ENCODE measurements at regions of chr5 and their contacts with region 1.

Region 1: DNA sequence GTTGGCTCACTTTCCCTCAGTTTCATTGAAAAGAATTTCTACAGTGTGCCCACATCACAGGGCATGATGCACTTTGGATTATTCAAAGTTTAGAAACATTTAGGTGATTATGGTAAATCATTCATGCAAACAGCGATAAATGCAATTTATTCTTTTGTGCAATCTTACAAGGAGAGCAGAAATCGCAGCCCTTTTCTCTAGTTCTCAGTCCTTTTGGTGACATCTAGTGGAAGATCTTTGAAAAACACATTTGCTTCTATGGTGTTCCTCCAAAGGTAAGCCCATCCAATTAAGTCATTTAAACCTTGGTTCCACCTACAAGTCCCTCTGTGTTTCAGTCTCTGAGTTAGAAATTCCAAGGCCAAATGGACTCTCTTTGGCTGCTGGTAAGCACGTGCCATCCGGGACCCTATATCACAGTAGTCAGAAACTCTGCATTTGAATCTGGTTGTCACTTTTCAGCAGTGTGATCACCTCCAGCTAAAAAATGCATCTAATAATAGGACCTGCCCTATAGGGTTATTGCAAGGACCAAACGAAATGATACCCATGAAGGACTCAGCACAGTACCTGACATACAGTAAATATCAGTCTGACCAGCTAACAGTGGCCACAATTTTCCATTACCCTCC is 66.4 kb downstream of the MACROH2A1 start:
- DNase-seq: peak; percentile 80
- ATAC-seq: peak; percentile 63
- H3K4me3 ChIP-seq: no peak overlapping the region
- H3K27ac ChIP-seq: no peak overlapping the region
- H3K4me1 ChIP-seq: no peaks in the 10 kb centered on the region
- H3K27me3 ChIP-seq: no peaks in the 10 kb centered on the region
- CTCF ChIP-seq: peak; percentile 70

Region 2: DNA sequence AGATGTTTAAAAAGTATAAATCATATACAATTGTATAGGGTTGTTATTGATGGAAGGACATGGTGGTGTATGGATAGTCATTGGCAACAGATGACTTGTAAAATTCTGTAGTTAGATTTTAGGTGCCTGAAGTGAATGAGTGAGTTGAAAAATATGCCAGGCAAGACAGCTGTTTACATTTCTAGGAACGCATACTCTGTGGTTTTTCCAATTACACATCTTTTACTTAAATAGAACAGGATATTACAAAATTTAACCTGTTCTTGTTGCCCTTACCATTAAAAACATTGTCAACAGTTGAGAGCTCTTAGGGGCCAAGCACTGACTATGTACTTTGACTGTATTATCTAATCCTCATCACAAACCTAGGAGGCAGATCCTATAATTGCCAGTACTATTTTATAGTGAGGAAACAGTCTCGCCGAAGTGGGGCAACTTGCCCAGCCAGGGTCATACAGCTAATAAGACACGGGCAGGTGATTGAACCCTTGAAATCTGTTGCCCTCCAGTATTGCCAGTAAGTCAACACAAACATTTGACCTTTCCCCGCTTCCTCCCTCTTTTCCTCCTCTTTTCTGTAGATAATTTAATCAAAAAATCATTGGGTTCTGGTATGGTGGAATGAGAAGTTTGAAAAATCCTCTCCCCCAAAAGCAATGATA is 22.2 kb before region 1 on chr5:
- CTCF ChIA-PET with region 1: no interaction called
- POLR2A ChIA-PET with region 1: no interaction called
- intact Hi-C with region 1: no loop called
- DNase-seq: peak; percentile 76
- ATAC-seq: peak; percentile 57
- H3K4me3 ChIP-seq: peak overlapping the region; percentile 9; the same call in 1 of the 2 replicates
- H3K27ac ChIP-seq: peak overlapping the region; percentile 93
- H3K4me1 ChIP-seq: peaks cover 35% of the 10 kb centered on the region
- H3K27me3 ChIP-seq: no peaks in the 10 kb centered on the region
- CTCF ChIP-seq: no peak

Region 3: GRCh38 chr5:135383803-135384495 is 51.3 kb after region 1 on chr5:
- CTCF ChIA-PET with region 1: no interaction called
- POLR2A ChIA-PET with region 1: no interaction called
- intact Hi-C with region 1: no loop called
- DNase-seq: no peak
- ATAC-seq: no peak
- H3K4me3 ChIP-seq: no peak overlapping the region
- H3K27ac ChIP-seq: no peak overlapping the region
- H3K4me1 ChIP-seq: peaks cover 21% of the 10 kb centered on the region
- H3K27me3 ChIP-seq: no peaks in the 10 kb centered on the region
- CTCF ChIP-seq: no peak

Region 4: DNA sequence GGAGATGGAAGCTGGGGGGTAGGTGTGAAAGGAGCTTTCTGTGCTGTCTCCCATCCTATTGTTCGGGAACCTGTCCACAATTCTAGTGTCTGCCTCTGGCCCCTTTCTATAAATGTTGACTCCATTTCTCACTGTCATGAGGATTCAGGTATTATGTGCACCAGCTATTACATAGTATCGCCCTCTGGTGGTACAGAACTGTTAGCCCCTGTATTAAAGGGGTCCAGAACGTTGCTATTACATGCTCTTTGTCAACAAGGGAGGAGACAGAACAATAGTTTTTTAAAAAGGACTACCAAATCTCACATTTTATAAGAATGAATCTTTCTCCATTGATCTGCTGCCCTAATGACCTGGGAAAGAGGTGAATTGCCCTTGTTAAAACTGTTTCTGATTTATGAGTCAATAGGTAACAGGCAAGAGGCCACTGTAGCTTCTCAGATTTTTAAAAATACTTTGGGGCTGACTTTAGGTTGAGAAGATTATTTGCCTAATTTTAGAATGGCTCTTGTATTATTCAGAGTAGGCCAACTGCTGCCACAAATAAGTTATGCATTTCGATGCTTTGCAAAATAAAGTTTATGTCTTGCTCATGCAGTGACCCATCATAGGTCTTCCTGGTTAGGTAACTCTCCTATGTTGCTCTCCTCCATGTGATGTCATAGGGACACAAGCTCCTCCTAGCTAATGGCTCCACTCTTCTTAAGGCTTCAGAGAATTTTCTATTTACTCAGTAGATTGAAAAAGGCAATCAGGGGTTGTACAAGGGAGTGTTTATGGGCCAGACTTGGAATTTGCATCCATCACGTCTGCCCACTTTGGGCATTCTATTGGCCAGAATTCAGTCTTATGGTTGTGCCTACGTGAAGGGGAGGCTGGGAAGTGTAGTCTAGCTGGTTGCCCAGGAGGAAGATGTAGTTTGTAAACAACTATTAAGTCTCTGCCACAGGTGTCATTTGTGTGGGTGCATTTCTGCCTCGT is 93.8 kb after region 1 on chr5:
- CTCF ChIA-PET with region 1: no interaction called
- POLR2A ChIA-PET with region 1: no interaction called
- intact Hi-C with region 1: loop called (anchors 5 kb)
- DNase-seq: peak; percentile 70
- ATAC-seq: peak; percentile 90
- H3K4me3 ChIP-seq: no peak overlapping the region
- H3K27ac ChIP-seq: no peak overlapping the region
- H3K4me1 ChIP-seq: no peaks in the 10 kb centered on the region
- H3K27me3 ChIP-seq: no peaks in the 10 kb centered on the region; the same call in 1 of the 2 replicates
- CTCF ChIP-seq: peak; percentile 74

Region 5: DNA sequence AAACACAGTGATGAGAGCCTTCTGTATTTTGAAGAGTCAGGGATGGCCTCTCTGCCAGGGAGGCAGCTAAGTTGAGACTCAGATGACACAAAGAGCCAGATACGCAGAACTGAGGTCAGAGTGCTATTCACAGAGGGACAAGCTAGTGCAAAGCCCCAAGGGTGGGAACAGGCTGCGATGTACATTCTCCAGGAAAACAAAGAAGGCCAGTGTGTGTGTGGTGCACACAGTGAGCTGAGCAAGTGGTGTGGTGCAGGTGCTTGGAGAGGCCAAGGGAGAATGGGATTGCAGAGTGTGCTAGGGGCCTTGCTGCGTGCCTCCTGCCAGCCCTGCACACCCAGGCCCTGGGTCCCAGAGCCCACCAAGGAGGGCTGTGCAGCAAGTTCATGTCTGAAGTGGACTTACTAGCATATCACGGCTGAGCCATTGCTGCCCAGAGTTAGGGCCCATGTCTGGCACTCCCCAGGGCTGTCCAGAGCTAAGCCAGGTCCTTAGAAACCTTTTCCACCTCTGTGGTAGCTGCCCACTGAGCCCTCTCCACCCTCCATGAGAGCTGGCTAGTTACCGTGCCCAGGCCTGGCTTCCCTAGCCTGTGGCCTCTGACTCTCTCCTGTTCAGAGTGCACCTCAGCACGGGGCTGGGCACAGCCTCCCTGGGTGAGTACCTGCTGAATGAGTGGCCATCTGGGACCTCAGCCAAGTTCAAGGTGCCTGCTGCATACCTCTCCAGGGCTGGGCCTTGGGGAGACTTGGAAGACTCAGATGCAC is 511.1 kb after region 1 on chr5:
- CTCF ChIA-PET with region 1: no interaction called
- POLR2A ChIA-PET with region 1: no interaction called
- intact Hi-C with region 1: no loop called
- DNase-seq: peak; percentile 16
- ATAC-seq: no peak
- H3K4me3 ChIP-seq: no peak overlapping the region
- H3K27ac ChIP-seq: no peak overlapping the region
- H3K4me1 ChIP-seq: no peaks in the 10 kb centered on the region
- H3K27me3 ChIP-seq: peaks cover 13% of the 10 kb centered on the region
- CTCF ChIP-seq: no peak

Measured in PC-3 (cell line).